ENCODE measurements at regions of chr2 and their contacts with region 1.

Region 1: DNA sequence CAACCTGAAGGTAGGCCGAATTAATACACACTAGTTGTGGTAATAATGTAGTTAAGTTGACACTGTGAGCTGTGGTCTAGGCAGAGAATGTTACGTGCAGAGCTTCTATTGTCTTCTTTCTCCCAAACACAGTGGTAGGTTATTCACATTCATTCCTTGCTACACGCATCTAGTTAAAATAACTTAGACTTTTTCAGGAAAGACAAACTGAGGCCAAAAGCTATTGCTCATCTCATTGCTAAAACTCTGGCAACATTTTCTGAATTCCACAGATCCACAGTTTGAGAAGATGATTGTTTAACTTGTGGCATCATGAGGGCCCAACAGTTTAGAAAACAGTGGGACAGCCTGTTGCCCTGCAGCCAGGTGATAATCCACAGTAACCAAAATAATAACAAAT is 850.4 kb upstream of the FSHR start:
- DNase-seq: no peak
- H3K4me3 ChIP-seq: no peak overlapping the region
- H3K27ac ChIP-seq: no peak overlapping the region
- H3K4me1 ChIP-seq: no peaks in the 10 kb centered on the region
- H3K27me3 ChIP-seq: no peaks in the 10 kb centered on the region
- CTCF ChIP-seq: no peak

Region 2: GRCh38 chr2:50066873-50067272 is 62.2 kb after region 1 on chr2:
- CTCF ChIA-PET with region 1: no interaction called
- dilution Hi-C with region 1: loop called (anchors 5 kb)
- in situ Hi-C with region 1: no loop called
- intact Hi-C with region 1: no loop called
- DNase-seq: no peak
- H3K4me3 ChIP-seq: no peak overlapping the region
- H3K27ac ChIP-seq: no peak overlapping the region
- H3K4me1 ChIP-seq: no peaks in the 10 kb centered on the region
- H3K27me3 ChIP-seq: no peaks in the 10 kb centered on the region
- CTCF ChIP-seq: no peak

Region 3: GRCh38 chr2:50309503-50309902 is 304.8 kb after region 1 on chr2:
- CTCF ChIA-PET with region 1: no interaction called
- dilution Hi-C with region 1: no loop called
- in situ Hi-C with region 1: no loop called
- intact Hi-C with region 1: no loop called
- DNase-seq: no peak
- H3K4me3 ChIP-seq: no peak overlapping the region
- H3K27ac ChIP-seq: no peak overlapping the region
- H3K4me1 ChIP-seq: no peaks in the 10 kb centered on the region
- H3K27me3 ChIP-seq: no peaks in the 10 kb centered on the region
- CTCF ChIP-seq: no peak

Measured in mammary epithelial cell (primary cell).